ENCODE measurements at regions of chr17 and their contacts with region 1.

Region 1: DNA sequence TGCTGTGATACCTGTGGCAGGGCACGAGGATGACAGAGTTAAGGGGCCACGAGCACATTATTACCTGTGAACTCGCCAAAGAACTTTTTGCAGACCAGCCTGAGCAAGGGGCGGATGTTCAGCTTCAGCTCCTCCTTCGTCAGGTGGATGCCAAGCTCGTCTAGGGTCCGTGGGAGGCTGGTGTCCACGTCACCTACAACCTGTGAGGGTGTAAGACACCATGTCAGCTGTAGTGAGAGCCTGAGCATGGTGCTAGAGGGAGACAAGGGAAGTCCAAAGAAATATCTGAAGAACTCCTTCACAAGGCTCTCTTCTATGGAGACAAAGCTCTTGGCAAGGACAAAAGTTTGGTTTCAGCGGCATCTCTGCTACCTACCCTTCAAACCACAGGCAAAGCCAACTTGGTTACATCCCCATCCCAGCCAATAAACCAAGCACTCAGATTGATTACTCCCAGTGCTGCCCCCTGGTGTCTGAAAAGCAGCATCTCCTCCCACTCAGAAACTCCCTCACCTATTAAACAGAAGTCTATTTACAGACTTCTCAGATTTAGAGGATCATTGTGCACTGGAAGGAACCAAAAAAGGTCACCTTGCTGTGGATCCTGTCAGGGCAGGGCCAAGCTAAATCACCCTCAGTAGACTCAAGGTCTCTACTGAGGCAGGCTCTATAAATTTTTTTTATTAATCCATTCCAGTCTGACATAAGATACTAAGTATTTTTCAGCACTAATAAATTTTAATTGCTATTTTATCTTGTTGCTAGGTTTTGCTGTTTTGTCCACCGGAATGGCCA is 17.4 kb downstream of the HIGD1B start:
- DNase-seq: no peak
- ATAC-seq: peak; percentile 92
- H3K4me3 ChIP-seq: no peak overlapping the region
- H3K27ac ChIP-seq: no peak overlapping the region
- H3K4me1 ChIP-seq: no peaks in the 10 kb centered on the region
- H3K27me3 ChIP-seq: no peaks in the 10 kb centered on the region
- CTCF ChIP-seq: peak; percentile 72 to 88 (median 78)
- EP300 ChIP-seq: no peak
- POLR2A ChIP-seq: no peak
- RAD21 ChIP-seq: peak; percentile 58

Region 2: GRCh38 chr17:44850612-44851011 is 14.5 kb before region 1 on chr17:
- CTCF ChIA-PET with region 1: interaction called, 13 read pairs
- POLR2A ChIA-PET with region 1: no interaction called
- RAD21 ChIA-PET with region 1: no interaction called
- SMC1A ChIA-PET with region 1: no interaction called
- in situ Hi-C with region 1: no loop called
- intact Hi-C with region 1: no loop called
- DNase-seq: no peak
- ATAC-seq: no peak
- H3K4me3 ChIP-seq: no peak overlapping the region
- H3K27ac ChIP-seq: no peak overlapping the region
- H3K4me1 ChIP-seq: no peaks in the 10 kb centered on the region
- H3K27me3 ChIP-seq: no peaks in the 10 kb centered on the region
- CTCF ChIP-seq: no peak
- EP300 ChIP-seq: no peak
- POLR2A ChIP-seq: no peak
- RAD21 ChIP-seq: no peak

Region 3: DNA sequence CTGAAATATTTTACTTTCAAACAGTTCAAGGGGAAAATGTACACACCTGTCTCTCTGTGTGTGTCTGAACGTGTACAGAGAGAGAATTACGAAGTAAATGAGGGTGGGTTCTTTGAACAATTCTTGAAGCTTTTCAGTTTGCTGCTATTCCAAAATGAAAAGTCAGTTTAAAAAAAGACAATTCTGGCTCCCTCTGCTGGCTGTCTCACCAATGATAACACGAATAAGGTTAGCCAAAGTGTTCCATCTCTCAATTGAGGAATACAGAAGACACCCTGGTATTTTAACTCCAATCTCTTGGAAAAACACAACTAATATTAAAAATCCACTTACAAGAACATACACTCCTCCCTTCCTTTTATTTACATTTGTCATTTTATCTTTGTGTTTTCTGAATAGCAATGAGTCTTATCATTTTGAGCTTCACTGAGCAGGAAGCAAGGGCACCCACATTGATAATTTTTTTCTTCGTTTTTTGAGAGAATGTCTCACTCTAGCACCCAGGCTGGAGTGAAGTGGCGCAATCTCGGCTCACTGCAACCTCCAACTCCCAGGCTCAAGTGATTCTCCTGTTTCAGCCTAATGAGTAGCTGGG is 13.7 kb after region 1 on chr17:
- CTCF ChIA-PET with region 1: interaction called, 13 read pairs
- POLR2A ChIA-PET with region 1: no interaction called
- RAD21 ChIA-PET with region 1: no interaction called
- SMC1A ChIA-PET with region 1: interaction called, 3 read pairs
- in situ Hi-C with region 1: no loop called
- intact Hi-C with region 1: no loop called
- DNase-seq: no peak
- ATAC-seq: 0 out of 3 replicates have a peak, but pooled peaks have one; percentile 18
- H3K4me3 ChIP-seq: no peak overlapping the region
- H3K27ac ChIP-seq: no peak overlapping the region
- H3K4me1 ChIP-seq: no peaks in the 10 kb centered on the region
- H3K27me3 ChIP-seq: no peaks in the 10 kb centered on the region
- CTCF ChIP-seq: peak; percentile 43 to 58 (median 45); a peak in 5 of 6 replicates
- EP300 ChIP-seq: no peak
- POLR2A ChIP-seq: no peak
- RAD21 ChIP-seq: peak; percentile 34